MCF 10A (cell line): ENCODE measurements at regions of chr5 and their contacts with region 1.

Region 1: DNA sequence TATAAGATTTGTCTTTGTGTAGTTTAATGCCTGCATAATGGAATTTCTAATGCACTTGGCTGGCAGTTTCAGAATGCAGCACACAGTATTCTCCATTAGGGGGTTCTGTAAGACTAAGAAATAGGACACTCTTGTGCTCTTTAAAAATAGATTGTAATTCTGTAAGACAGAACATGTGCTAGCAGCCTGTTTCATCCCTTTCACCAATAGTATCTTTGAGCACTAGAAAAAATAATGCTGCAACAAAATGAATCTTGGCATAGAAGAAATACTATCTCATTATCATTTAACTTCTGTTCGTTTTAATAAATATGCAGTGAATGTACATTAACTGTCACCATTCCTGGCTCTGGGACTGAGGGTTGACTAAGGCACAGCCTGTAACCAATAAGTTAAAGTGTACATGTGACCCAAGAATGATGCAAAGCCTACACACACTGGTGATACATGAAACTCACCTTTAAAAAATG is 23.8 kb upstream of the ZNF622 start:
- DNase-seq: peak; percentile 48
- H3K4me3 Mint-ChIP-seq: no peak overlapping the region
- H3K27ac Mint-ChIP-seq: peak overlapping the region; percentile 29
- H3K4me1 Mint-ChIP-seq: peaks cover 16% of the 10 kb centered on the region
- H3K27me3 Mint-ChIP-seq: no peaks in the 10 kb centered on the region
- CTCF ChIP-seq: peak; percentile 68

Region 2: DNA sequence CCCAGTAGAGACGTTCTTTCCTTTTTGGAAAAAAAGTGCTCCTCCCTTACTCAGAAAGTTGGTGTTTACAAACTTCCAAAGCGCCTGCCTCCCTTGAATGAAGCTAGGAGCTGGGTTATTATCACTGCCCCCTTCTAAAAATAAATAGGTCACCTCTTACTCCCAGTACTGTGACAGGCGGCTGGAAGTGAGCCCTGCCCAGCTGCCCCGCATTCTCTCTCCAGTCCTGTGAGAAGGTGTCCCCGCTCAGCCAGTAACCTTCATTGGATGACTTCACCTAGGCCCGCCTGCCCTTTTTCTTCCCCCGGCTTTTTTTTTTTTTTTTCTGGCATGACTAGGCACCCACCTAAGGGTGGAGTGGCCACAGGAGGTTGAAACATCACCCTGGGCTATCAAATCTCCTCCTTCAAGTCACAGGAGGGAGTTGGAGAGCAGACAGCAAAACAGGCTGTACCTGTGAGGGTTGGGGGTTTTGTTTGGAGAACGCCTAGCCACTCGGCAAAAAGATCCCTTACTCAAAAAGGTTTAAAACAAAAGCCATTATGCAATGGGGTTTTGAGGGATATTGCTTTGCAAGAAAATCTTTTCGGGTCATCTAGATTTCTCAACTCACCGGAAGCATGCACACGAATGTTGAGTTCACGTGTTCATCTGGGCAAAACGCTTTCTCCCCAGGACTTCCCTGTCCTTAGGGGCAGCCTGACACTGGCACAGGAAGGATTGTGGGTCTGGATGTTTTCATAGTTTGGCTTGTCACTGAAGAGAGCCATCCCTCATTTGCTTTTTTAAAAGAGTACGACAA is 19.6 kb after region 1 on chr5:
- CTCF ChIA-PET with region 1: interaction called, 21 read pairs
- POLR2A ChIA-PET with region 1: interaction called, 67 read pairs
- intact Hi-C with region 1: no loop called
- DNase-seq: peak; percentile 81
- H3K4me3 Mint-ChIP-seq: peak overlapping the region; percentile 75
- H3K27ac Mint-ChIP-seq: peak overlapping the region; percentile 97
- H3K4me1 Mint-ChIP-seq: peaks cover 30% of the 10 kb centered on the region
- H3K27me3 Mint-ChIP-seq: no peaks in the 10 kb centered on the region
- CTCF ChIP-seq: no peak

Region 3: DNA sequence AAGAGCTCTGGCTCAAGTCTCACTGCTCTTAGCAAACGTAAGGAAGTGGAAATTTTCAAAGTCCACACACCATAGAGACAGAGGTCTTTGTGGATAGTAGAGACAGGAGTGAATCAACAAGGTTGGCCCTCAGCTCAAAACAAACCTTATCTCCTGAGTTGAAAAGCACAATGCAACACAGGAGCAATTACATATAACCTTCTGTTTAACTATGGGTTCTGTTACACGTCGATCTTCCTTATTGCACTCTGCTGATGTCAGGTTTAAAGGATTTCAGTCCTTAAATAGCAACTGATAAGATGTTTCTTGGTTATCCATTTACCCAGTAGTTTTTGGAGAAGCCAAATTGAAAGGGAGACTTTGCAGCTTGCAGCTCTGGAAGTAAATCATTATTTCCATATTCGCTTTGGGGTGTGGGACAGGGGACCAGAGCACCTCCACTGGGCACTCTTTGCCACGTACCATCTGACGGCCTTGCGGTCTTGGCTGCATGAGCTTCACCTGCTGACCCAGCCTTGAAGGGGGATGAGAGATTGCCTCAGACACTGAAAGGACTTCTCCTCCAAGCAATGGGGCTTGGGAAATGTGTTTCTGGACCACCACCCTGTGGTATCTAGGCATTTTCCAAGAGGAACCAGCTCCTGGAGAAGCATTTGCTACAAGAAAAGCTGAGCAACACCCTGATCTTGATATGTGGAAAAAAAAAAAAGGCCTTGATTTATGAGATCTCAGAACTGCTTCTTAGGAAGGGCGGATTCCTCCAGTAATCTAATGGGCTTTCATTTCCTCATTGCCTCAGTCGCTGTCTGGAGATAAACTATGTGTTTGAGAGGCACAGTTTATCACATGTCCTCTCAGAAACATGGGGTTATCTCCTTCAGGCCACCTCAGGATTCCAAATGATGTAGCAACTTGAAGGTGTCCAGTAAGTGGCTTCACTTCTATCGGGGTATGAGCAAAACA is 32.4 kb after region 1 on chr5:
- CTCF ChIA-PET with region 1: no interaction called
- POLR2A ChIA-PET with region 1: no interaction called
- intact Hi-C with region 1: no loop called
- DNase-seq: no peak
- H3K4me3 Mint-ChIP-seq: no peak overlapping the region
- H3K27ac Mint-ChIP-seq: no peak overlapping the region
- H3K4me1 Mint-ChIP-seq: no peaks in the 10 kb centered on the region
- H3K27me3 Mint-ChIP-seq: no peaks in the 10 kb centered on the region
- CTCF ChIP-seq: no peak

Region 4: GRCh38 chr5:16585041-16585667 is 95.8 kb after region 1 on chr5:
- CTCF ChIA-PET with region 1: interaction called, 10 read pairs
- POLR2A ChIA-PET with region 1: no interaction called
- intact Hi-C with region 1: no loop called
- DNase-seq: peak; percentile 24
- H3K4me3 Mint-ChIP-seq: no peak overlapping the region
- H3K27ac Mint-ChIP-seq: no peak overlapping the region
- H3K4me1 Mint-ChIP-seq: no peaks in the 10 kb centered on the region
- H3K27me3 Mint-ChIP-seq: no peaks in the 10 kb centered on the region
- CTCF ChIP-seq: peak; percentile 62

Region 5: DNA sequence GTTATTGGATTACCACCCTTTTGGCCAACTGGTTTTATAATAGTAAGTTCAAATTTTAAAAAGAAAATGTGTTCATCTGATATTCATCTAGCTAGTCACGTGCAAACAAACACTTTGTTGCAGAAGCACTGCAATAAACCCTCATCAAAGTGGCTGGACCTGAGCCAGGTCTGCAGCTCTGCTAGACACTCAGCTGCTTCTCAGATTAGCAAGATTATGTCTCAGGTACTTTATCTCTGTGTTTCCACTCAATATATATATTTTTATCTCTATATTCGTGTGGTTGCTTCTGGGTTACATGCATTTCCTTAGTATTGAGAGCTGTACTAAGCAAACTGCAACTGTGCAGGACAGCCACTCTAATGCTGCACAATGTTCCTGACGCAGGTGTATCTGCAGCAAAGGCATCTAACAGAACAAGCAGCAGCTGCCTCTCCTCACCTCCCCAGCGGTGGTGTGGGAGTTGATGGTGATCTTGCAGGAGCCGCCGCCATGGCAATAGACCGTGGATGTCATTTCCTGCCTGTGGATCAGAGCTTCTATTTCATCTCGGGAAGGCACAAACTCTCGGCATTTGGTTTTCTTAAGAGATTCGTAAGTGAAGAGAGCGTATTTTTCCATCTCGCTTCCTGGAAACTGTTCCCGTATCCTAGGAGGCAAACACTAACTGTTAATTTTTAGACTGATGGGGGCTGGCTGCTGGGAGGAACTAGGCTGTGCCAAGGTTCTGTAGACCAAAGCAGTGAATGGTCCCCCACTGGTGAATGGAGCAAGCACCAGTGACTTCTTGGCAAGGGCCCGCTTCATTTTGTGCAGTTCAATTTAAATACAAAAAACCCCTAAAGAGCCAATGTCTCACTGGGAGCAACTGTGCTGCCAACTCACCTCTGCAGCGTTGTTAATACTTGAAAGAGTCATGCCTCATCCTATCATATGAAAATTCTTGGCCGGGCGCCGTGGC is 184.2 kb after region 1 on chr5:
- CTCF ChIA-PET with region 1: interaction called, 73 read pairs
- POLR2A ChIA-PET with region 1: no interaction called
- intact Hi-C with region 1: no loop called
- DNase-seq: no peak
- H3K4me3 Mint-ChIP-seq: no peak overlapping the region
- H3K27ac Mint-ChIP-seq: no peak overlapping the region
- H3K4me1 Mint-ChIP-seq: peaks cover 5% of the 10 kb centered on the region
- H3K27me3 Mint-ChIP-seq: no peaks in the 10 kb centered on the region
- CTCF ChIP-seq: no peak

Region 6: DNA sequence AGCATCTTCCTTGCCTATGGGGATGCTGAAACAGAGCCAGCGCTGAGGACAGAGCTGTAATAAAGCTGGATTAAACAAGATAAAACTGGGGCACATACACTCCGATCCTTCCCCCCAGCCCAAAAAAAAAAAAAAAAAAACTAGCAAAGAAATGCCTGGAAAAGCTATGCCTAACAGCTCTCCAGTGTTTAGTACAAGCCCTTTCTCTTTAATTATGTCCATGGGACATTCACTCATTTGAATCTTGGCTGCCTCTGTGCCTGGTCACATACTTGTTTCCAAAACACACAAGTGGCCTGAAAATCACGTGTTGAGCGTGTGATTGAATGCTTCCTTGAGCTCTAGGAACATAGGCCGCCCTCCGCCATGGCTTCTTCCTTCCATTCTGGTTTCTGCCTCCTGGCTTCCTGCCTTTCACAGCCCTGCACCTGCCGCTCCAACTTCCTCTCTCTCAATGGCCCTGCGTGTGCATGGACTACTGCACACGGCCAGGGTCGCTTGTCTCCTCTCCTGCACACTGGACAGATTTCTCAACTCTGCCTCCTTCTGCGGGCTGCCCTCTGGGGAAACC is 238.5 kb after region 1 on chr5:
- CTCF ChIA-PET with region 1: no interaction called
- POLR2A ChIA-PET with region 1: no interaction called
- intact Hi-C with region 1: no loop called
- DNase-seq: no peak
- H3K4me3 Mint-ChIP-seq: no peak overlapping the region
- H3K27ac Mint-ChIP-seq: no peak overlapping the region
- H3K4me1 Mint-ChIP-seq: no peaks in the 10 kb centered on the region
- H3K27me3 Mint-ChIP-seq: no peaks in the 10 kb centered on the region
- CTCF ChIP-seq: no peak

Region 7: DNA sequence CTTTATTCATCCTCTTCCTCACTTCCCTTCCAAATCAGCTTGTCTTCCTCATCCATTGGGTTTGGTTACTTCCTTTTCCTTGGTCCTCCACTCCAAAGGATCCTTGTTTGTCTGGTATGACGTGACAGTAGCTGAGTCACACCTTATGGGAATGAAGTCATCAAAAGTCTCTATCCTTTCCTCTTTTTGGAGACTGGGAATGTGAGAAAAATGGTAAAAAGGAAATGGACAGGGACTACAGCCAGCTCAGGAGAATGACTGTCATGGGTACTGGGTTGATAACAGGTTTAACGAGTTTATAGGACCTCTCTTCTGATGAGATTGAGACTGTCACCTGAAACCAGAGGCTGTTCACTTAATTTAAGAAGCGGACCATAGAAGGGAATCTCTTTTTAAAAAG is 522.9 kb after region 1 on chr5:
- CTCF ChIA-PET with region 1: no interaction called
- POLR2A ChIA-PET with region 1: no interaction called
- intact Hi-C with region 1: no loop called
- DNase-seq: peak; percentile 28
- H3K4me3 Mint-ChIP-seq: no peak overlapping the region
- H3K27ac Mint-ChIP-seq: no peak overlapping the region
- H3K4me1 Mint-ChIP-seq: peaks cover 6% of the 10 kb centered on the region
- H3K27me3 Mint-ChIP-seq: no peaks in the 10 kb centered on the region
- CTCF ChIP-seq: no peak